Activated CD4-positive, alpha-beta T cell treated with anti-CD3 and anti-CD28 coated beads, Interleukin-2, amount 10 ng/mL, durations not matched to agents 7 days and 5 days (primary cell): ENCODE measurements at regions of chr1 and their contacts with region 1.

Region 1: GRCh38 chr1:1441002-1441888 is 5.8 kb downstream of the VWA1 start:
- DNase-seq: peak; percentile 50
- H3K4me3 Mint-ChIP-seq: no peak overlapping the region
- H3K27ac Mint-ChIP-seq: no peak overlapping the region
- H3K4me1 Mint-ChIP-seq: peaks cover 5% of the 10 kb centered on the region
- H3K27me3 Mint-ChIP-seq: peaks cover 3% of the 10 kb centered on the region

Region 2: GRCh38 chr1:1399187-1399871 is 41.9 kb before region 1 on chr1 and contains the start of gene CCNL2:
- CTCF ChIA-PET with region 1: interaction called, 10 read pairs
- POLR2A ChIA-PET with region 1: no interaction called
- DNase-seq: peak; percentile 99
- H3K4me3 Mint-ChIP-seq: peak within 1 kb of the TSS; percentile 80
- H3K27ac Mint-ChIP-seq: peak within 1 kb of the TSS; percentile 91
- H3K4me1 Mint-ChIP-seq: peaks cover 51% of the 10 kb centered on the region
- H3K27me3 Mint-ChIP-seq: no peaks in the 10 kb centered on the region
- total RNA-seq, gene CCNL2: 122 to 131 TPM

Region 3: DNA sequence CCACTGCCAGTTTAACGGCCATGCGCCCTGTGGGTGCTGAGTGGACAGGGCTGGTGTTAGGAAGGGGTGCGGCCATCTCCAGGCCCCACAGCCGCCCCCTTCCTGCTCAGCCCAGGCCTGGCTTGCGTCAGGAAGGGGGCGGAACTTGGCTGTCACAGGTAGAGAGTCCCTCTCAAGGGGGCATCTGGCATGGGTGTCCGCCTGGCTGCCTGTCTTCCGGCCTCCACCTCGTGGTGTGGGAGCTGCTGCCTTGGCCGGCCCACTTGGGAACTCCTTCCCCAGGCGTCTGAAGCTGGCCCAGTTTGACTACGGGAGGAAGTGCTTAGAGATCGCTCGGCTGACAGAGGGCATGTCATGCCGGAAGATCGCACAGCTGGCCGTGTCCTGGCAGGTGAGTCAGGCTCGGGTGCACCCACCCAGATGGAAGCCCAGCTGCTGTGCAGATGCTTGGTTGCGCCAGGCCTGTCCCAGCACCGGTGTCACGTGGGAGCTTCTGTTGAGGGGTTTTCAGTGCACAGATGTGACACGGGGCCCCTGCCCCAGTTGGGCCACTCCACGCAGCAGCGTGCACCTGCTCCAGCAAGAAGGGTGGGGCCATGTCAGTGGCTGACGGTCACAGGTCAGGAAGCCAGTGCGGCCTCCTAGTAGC is 21.2 kb after region 1 on chr1:
- CTCF ChIA-PET with region 1: no interaction called
- POLR2A ChIA-PET with region 1: no interaction called
- DNase-seq: no peak
- H3K4me3 Mint-ChIP-seq: peak overlapping the region; percentile 36
- H3K27ac Mint-ChIP-seq: peak overlapping the region; percentile 66
- H3K4me1 Mint-ChIP-seq: peaks cover 2% of the 10 kb centered on the region
- H3K27me3 Mint-ChIP-seq: peaks cover 2% of the 10 kb centered on the region